ENCODE measurements at regions of chr1 and their contacts with region 1.

Region 1: GRCh38 chr1:51768971-51769588 is 109.4 kb downstream of the NRDC start:
- DNase-seq: peak; percentile 70
- H3K4me3 ChIP-seq: no peak overlapping the region
- H3K27ac ChIP-seq: no peak overlapping the region
- H3K4me1 ChIP-seq: no peaks in the 10 kb centered on the region
- H3K27me3 ChIP-seq: no peaks in the 10 kb centered on the region
- CTCF ChIP-seq: peak; percentile 63 to 66
- POLR2A ChIP-seq: no peak

Region 2: GRCh38 chr1:51535006-51535592 is 234.0 kb before region 1 on chr1:
- CTCF ChIA-PET with region 1: interaction called, 22 read pairs
- POLR2A ChIA-PET with region 1: no interaction called
- dilution Hi-C with region 1: no loop called
- intact Hi-C with region 1: no loop called
- DNase-seq: peak; percentile 89
- H3K4me3 ChIP-seq: no peak overlapping the region
- H3K27ac ChIP-seq: no peak overlapping the region
- H3K4me1 ChIP-seq: peaks cover 10% of the 10 kb centered on the region
- H3K27me3 ChIP-seq: no peaks in the 10 kb centered on the region
- CTCF ChIP-seq: peak; percentile 65 to 83
- POLR2A ChIP-seq: no peak

Region 3: DNA sequence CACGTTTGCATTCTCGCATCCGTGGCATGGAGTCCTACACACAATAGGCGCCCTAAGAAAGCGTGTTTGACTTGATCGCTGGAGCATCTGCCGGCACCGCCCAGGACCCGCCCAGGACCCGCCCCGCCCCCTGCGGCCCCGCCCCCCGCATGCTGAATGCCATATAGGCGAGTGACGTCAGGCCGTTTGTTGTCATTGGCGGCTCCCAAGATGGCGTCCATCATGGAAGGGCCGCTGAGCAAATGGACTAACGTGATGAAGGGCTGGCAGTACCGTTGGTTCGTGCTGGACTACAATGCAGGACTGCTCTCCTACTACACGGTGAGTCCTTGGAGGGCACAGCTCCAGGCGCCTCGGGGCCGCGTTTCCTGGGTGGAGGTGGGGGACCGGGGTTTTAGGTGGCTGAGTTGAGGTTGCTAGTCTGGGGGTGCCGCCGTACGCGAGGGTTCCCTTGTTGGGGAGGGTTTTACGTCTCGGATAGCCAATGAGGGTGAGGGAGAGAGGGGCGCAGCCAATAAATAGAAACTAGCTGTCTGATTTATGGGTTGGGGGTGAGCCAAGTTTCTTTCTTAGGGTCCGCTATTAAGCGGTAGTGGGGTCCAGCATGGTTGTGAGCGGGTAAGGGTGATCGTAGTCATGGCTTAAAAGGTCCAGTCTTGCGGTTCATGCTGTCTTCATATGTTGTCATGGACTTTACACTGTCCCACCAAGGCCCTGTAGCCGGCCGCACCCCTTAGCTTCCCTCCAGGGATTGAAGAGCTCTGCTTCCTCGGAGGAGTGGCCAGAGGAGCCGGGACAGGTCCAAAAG is 152.0 kb before region 1 on chr1 and contains the start of gene OSBPL9:
- CTCF ChIA-PET with region 1: interaction called, 21 read pairs
- POLR2A ChIA-PET with region 1: no interaction called
- dilution Hi-C with region 1: no loop called
- intact Hi-C with region 1: loop called (anchors 2 kb)
- DNase-seq: peak; percentile 96
- H3K4me3 ChIP-seq: peak within 1 kb of the TSS; percentile 89 to 95 (median 92)
- H3K27ac ChIP-seq: peak within 1 kb of the TSS; percentile 50
- H3K4me1 ChIP-seq: peaks cover 28% of the 10 kb centered on the region
- H3K27me3 ChIP-seq: peaks cover 2 to 3% of the 10 kb centered on the region in 2 experiments
- CTCF ChIP-seq: no peak
- POLR2A ChIP-seq: peak; percentile 60
- total RNA-seq, gene OSBPL9: 74.8 and 80.3 TPM in 2 replicates

Region 4: GRCh38 chr1:51627678-51628077 is 141.4 kb before region 1 on chr1:
- CTCF ChIA-PET with region 1: interaction called, 71 read pairs
- POLR2A ChIA-PET with region 1: no interaction called
- dilution Hi-C with region 1: no loop called
- intact Hi-C with region 1: loop called (anchors 1 kb)
- DNase-seq: peak; percentile 65
- H3K4me3 ChIP-seq: no peak overlapping the region
- H3K27ac ChIP-seq: no peak overlapping the region
- H3K4me1 ChIP-seq: no peaks in the 10 kb centered on the region
- H3K27me3 ChIP-seq: no peaks in the 10 kb centered on the region
- CTCF ChIP-seq: peak; percentile 30 to 35
- POLR2A ChIP-seq: no peak

Region 5: DNA sequence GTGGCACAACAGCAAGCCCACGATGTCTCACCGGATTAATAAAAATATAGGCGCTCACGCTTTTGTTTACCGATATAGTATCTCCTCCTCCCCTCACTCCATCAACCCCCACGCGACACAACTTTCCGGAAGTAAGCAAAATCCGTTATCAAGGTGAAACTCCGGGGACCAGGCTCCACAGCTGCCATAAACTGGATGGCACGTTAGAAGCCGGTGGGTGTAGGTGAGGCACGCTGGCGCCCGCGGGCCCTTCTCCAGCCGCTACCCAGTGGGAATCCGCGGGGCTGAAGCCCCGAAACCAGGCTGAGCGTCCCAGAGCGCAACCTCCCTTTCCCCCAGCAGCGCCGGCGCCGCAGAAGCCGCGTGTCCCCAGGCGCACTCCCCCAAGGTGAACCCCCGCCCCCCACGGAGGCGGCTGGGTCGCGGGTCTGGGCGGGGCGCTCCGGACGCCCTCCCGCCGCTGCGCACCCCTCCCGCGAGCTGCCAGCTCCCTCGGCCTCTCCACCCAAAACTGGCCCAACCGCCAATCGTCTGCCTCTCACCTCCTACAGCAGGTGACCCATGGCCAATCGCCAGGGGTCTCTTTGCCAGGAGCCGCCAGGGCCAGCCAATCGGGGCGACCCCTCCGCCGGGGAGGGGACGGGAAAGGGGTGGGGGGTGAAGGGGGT is 39.8 kb before region 1 on chr1:
- CTCF ChIA-PET with region 1: interaction called, 10 read pairs
- POLR2A ChIA-PET with region 1: no interaction called
- dilution Hi-C with region 1: no loop called
- intact Hi-C with region 1: loop called (anchors 1 kb)
- DNase-seq: peak; percentile 92
- H3K4me3 ChIP-seq: peak overlapping the region; percentile 89 to 97 (median 94)
- H3K27ac ChIP-seq: peak overlapping the region; percentile 66
- H3K4me1 ChIP-seq: peaks cover 16% of the 10 kb centered on the region
- H3K27me3 ChIP-seq: no peaks in the 10 kb centered on the region
- CTCF ChIP-seq: no peak
- POLR2A ChIP-seq: no peak

Region 6: GRCh38 chr1:51750218-51750617 is 18.9 kb before region 1 on chr1:
- CTCF ChIA-PET with region 1: interaction called, 14 read pairs
- POLR2A ChIA-PET with region 1: no interaction called
- dilution Hi-C with region 1: no loop called
- intact Hi-C with region 1: no loop called
- DNase-seq: peak; percentile 87
- H3K4me3 ChIP-seq: no peak overlapping the region
- H3K27ac ChIP-seq: peak overlapping the region; percentile 62
- H3K4me1 ChIP-seq: peaks cover 20% of the 10 kb centered on the region
- H3K27me3 ChIP-seq: no peaks in the 10 kb centered on the region
- CTCF ChIP-seq: no peak
- POLR2A ChIP-seq: no peak

Measured in endothelial cell of umbilical vein (primary cell).